ENCODE measurements at regions of chr19 and their contacts with region 1.

Region 1: GRCh38 chr19:21082011-21082975 is at the start of gene ZNF714:
- DNase-seq: peak; percentile 51 to 94
- ATAC-seq: peak; percentile 100
- H3K4me3 ChIP-seq: peak within 1 kb of the TSS; percentile 77
- H3K27ac ChIP-seq: peak within 1 kb of the TSS; percentile 73 to 88
- H3K4me1 ChIP-seq: no peaks in the 10 kb centered on the region
- CTCF ChIP-seq: no peak
- EP300 ChIP-seq: no peak
- POLR2A ChIP-seq: peak; percentile 49
- RAD21 ChIP-seq: no peak
- polyA plus RNA-seq, gene ZNF714: 5.9 and 8.1 TPM in 2 replicates

Region 2: DNA sequence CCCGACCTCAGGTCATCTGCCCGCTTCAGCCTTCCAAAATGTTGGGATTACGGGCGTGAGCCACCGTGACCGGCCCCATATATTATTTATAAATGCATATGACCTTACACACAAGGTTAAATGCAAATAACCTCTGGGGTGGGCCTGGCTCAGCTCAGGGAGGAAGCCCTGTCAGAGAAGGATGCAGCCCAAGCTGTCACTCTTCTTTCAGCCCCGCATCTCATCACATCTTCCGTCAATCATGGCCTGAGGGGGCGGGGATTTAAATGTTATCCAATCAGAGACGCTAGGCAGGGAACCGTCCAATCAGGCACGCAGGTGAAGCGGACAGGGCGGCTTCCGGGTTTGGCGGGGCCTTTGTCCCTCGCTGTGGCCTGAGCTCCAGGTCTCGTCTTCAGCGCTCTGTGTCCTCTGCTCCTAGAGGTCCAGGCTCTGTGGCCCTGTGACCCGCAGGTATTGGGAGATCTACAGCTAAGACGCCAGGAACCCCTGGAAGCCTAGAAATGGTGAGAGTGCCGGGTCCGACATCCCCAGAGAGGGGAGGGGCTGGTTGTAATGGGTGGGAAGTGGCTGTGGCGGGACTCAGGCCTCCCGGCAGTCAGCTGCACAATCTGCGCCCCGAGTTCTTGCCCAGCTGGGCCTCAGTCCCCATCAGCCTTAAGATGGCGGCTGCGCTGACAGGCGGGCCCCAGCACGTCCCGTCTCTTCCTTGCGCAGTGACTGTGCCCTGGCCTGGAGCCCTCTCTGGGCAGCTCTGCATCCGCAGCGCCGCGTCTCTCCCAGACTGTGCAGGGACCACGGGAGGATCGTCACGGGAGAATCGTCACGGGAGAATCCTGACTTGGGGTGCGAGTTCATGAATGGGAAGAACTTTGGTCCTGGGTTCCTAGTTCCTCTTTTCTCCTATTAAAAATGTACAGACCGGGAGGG is 61.7 kb before region 1 on chr19 and contains the start of gene ZNF430:
- CTCF ChIA-PET with region 1: no interaction called
- POLR2A ChIA-PET with region 1: interaction called, 10 read pairs
- DNase-seq: peak; percentile 49 to 94
- ATAC-seq: peak; percentile 100
- H3K4me3 ChIP-seq: peak within 1 kb of the TSS; percentile 79
- H3K27ac ChIP-seq: peak within 1 kb of the TSS; percentile 81 to 92
- H3K4me1 ChIP-seq: no peaks in the 10 kb centered on the region
- CTCF ChIP-seq: no peak
- EP300 ChIP-seq: no peak
- POLR2A ChIP-seq: peak; percentile 35
- RAD21 ChIP-seq: no peak
- polyA plus RNA-seq, gene ZNF430: 3.6 and 4.8 TPM in 2 replicates

Measured in A549 (cell line).